ENCODE measurements at regions of chr16 and their contacts with region 1.

Region 1: GRCh38 chr16:17467923-17468540 is 2.7 kb downstream of the XYLT1 start:
- DNase-seq: peak in 5 of 9 donors; percentile 13 to 39 (median 24)
- ATAC-seq: peak; percentile 39
- H3K4me3 ChIP-seq: peak overlapping the region; percentile 9
- H3K4me3 Mint-ChIP-seq: peak overlapping the region; percentile 84 to 98 (median 95)
- H3K27ac ChIP-seq: no peak overlapping the region
- H3K27ac Mint-ChIP-seq: peak overlapping the region in 5 of 9 donors; percentile 6 to 90 (median 20)
- H3K4me1 ChIP-seq: peaks cover 20 to 26% of the 10 kb centered on the region in 2 donors
- H3K4me1 Mint-ChIP-seq: peaks cover 47 to 64% (median 57%) of the 10 kb centered on the region in 7 donors
- H3K27me3 ChIP-seq: no peaks in the 10 kb centered on the region
- H3K27me3 Mint-ChIP-seq: no peaks in the 10 kb centered on the region

Region 2: DNA sequence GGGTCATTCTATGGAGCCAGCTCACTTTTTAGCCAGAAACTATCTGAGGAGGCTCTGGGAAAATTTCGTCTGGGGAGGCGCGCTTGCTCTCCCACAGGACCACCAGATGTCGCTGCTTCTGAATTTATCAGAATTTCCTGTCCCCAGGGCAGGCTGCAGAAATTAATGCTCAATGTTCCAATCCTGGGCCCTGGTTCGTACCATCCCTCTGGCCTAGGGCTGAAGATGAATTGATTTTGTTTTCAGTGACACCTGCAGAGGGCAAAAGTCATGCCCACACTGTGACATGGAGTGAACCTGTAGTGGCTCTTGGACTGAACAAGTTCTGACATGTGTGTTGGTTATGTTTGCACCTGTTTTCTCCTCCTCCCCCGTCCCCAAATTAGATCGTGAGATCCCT is 606.5 kb before region 1 on chr16:
- CTCF ChIA-PET with region 1: no interaction called
- POLR2A ChIA-PET with region 1: no interaction called
- intact Hi-C with region 1: loop called (anchors 1 to 5 kb)
- DNase-seq: peak; percentile 15 to 63 (median 50)
- ATAC-seq: no peak
- H3K4me3 ChIP-seq: no peak overlapping the region
- H3K4me3 Mint-ChIP-seq: no peak overlapping the region
- H3K27ac ChIP-seq: no peak overlapping the region
- H3K27ac Mint-ChIP-seq: peak overlapping the region in 1 of 9 donors; percentile 13
- H3K4me1 ChIP-seq: no peaks in the 10 kb centered on the region
- H3K4me1 Mint-ChIP-seq: peaks cover 0 to 3% (median 0%) of the 10 kb centered on the region in 7 donors
- H3K27me3 ChIP-seq: no peaks in the 10 kb centered on the region
- H3K27me3 Mint-ChIP-seq: peaks cover 2 to 17% (median 10%) of the 10 kb centered on the region in 5 donors

Region 3: DNA sequence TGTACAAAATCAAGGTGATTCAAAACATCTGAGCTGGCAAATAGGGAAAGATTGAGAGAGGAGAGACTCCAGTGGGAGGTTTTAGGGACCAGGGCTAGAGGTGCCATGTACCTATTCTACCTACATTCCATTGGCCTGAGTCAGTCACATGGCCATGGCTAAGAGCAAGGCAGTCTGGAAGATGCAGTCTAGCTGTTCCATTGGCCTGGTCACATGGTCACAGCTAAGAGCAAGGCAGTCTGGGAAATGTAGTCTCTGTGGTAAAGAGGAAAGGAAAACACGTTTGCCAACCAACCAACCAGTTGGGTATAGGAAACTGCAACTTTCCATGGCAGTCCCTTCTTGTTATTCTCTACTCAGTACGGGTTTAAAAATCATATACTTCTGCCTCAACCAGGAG is 366.4 kb before region 1 on chr16:
- CTCF ChIA-PET with region 1: no interaction called
- POLR2A ChIA-PET with region 1: no interaction called
- intact Hi-C with region 1: no loop called
- DNase-seq: no peak
- ATAC-seq: no peak
- H3K4me3 ChIP-seq: no peak overlapping the region
- H3K4me3 Mint-ChIP-seq: no peak overlapping the region
- H3K27ac ChIP-seq: no peak overlapping the region
- H3K27ac Mint-ChIP-seq: peak overlapping the region in 2 of 9 donors; percentile 39 to 44
- H3K4me1 ChIP-seq: peaks cover 4 to 9% of the 10 kb centered on the region in 2 donors
- H3K4me1 Mint-ChIP-seq: peaks cover 9 to 30% (median 19%) of the 10 kb centered on the region in 7 donors
- H3K27me3 ChIP-seq: no peaks in the 10 kb centered on the region
- H3K27me3 Mint-ChIP-seq: no peaks in the 10 kb centered on the region

Region 4: DNA sequence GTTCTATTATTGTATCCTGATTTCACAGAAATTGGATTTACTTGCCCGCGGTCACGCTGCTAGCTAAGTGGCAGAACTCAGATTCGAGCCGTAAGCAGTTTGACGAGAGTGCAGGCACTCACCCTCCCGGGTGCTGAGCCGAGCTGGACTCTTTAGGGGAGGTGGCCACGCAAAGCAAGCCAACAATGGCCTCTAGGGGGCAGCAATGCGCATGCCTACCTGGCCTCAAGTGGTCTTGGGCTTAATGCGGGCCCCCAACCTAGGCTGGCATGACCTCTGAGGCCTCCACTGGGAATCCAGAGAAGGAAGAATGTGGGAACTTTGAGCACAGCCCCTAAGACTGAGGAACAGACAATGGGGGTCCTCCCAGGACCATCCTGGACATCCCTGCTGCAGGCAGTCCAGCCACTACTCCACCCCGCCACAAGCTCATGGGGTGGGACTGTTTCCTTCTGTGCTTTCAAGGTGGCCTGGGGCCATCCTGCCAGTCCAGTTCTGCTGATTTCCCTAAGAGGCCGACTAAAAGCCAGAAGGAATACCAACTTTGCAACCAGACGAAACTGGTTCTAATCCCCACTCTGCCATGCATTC is 273.7 kb before region 1 on chr16:
- CTCF ChIA-PET with region 1: interaction called, 10 read pairs
- POLR2A ChIA-PET with region 1: no interaction called
- intact Hi-C with region 1: loop called (anchors 1 to 2 kb)
- DNase-seq: peak; percentile 4 to 57 (median 28)
- ATAC-seq: peak; percentile 70
- H3K4me3 ChIP-seq: no peak overlapping the region
- H3K4me3 Mint-ChIP-seq: no peak overlapping the region
- H3K27ac ChIP-seq: no peak overlapping the region
- H3K27ac Mint-ChIP-seq: no peak overlapping the region
- H3K4me1 ChIP-seq: no peaks in the 10 kb centered on the region
- H3K4me1 Mint-ChIP-seq: peaks cover 0 to 13% (median 0%) of the 10 kb centered on the region in 7 donors
- H3K27me3 ChIP-seq: no peaks in the 10 kb centered on the region
- H3K27me3 Mint-ChIP-seq: no peaks in the 10 kb centered on the region

Region 5: GRCh38 chr16:17238284-17239028 is 229.6 kb before region 1 on chr16:
- CTCF ChIA-PET with region 1: no interaction called
- POLR2A ChIA-PET with region 1: no interaction called
- intact Hi-C with region 1: loop called in 1 of 2 experiments (anchors 10 kb)
- DNase-seq: peak in 1 of 9 donors; percentile 22
- ATAC-seq: peak; percentile 57
- H3K4me3 ChIP-seq: no peak overlapping the region
- H3K4me3 Mint-ChIP-seq: peak overlapping the region in 3 of 10 donors; percentile 5 to 58 (median 30)
- H3K27ac ChIP-seq: no peak overlapping the region
- H3K27ac Mint-ChIP-seq: peak overlapping the region in 3 of 9 donors; percentile 29 to 65 (median 46)
- H3K4me1 ChIP-seq: peaks cover 0 to 5% of the 10 kb centered on the region in 2 donors
- H3K4me1 Mint-ChIP-seq: peaks cover 29 to 47% (median 43%) of the 10 kb centered on the region in 7 donors
- H3K27me3 ChIP-seq: no peaks in the 10 kb centered on the region
- H3K27me3 Mint-ChIP-seq: no peaks in the 10 kb centered on the region

Region 6: GRCh38 chr16:17343028-17343427 is 125.0 kb before region 1 on chr16:
- CTCF ChIA-PET with region 1: interaction called, 3 read pairs
- POLR2A ChIA-PET with region 1: interaction called, 3 read pairs
- intact Hi-C with region 1: loop called in 1 of 2 experiments (anchors 2 kb)
- DNase-seq: peak in 8 of 9 donors; percentile 25 to 69 (median 56)
- ATAC-seq: peak; percentile 80
- H3K4me3 ChIP-seq: peak overlapping the region; percentile 16
- H3K4me3 Mint-ChIP-seq: peak overlapping the region; percentile 40 to 83 (median 76)
- H3K27ac ChIP-seq: no peak overlapping the region
- H3K27ac Mint-ChIP-seq: peak overlapping the region; percentile 32 to 95 (median 90)
- H3K4me1 ChIP-seq: peaks cover 51 to 64% of the 10 kb centered on the region in 2 donors
- H3K4me1 Mint-ChIP-seq: peaks cover 61 to 97% (median 83%) of the 10 kb centered on the region in 7 donors
- H3K27me3 ChIP-seq: no peaks in the 10 kb centered on the region
- H3K27me3 Mint-ChIP-seq: no peaks in the 10 kb centered on the region

Region 7: GRCh38 chr16:17416461-17417311 is 51.3 kb before region 1 on chr16:
- CTCF ChIA-PET with region 1: no interaction called
- POLR2A ChIA-PET with region 1: no interaction called
- intact Hi-C with region 1: loop called (anchors 1 to 5 kb)
- DNase-seq: peak; percentile 24 to 65 (median 55)
- ATAC-seq: peak; percentile 93
- H3K4me3 ChIP-seq: peak overlapping the region; percentile 22
- H3K4me3 Mint-ChIP-seq: peak overlapping the region; percentile 68 to 91 (median 85)
- H3K27ac ChIP-seq: peak overlapping the region; percentile 60
- H3K27ac Mint-ChIP-seq: peak overlapping the region; percentile 79 to 97 (median 91)
- H3K4me1 ChIP-seq: peaks cover 13 to 14% of the 10 kb centered on the region in 2 donors
- H3K4me1 Mint-ChIP-seq: peaks cover 18 to 69% (median 52%) of the 10 kb centered on the region in 7 donors
- H3K27me3 ChIP-seq: no peaks in the 10 kb centered on the region
- H3K27me3 Mint-ChIP-seq: no peaks in the 10 kb centered on the region

Region 8: DNA sequence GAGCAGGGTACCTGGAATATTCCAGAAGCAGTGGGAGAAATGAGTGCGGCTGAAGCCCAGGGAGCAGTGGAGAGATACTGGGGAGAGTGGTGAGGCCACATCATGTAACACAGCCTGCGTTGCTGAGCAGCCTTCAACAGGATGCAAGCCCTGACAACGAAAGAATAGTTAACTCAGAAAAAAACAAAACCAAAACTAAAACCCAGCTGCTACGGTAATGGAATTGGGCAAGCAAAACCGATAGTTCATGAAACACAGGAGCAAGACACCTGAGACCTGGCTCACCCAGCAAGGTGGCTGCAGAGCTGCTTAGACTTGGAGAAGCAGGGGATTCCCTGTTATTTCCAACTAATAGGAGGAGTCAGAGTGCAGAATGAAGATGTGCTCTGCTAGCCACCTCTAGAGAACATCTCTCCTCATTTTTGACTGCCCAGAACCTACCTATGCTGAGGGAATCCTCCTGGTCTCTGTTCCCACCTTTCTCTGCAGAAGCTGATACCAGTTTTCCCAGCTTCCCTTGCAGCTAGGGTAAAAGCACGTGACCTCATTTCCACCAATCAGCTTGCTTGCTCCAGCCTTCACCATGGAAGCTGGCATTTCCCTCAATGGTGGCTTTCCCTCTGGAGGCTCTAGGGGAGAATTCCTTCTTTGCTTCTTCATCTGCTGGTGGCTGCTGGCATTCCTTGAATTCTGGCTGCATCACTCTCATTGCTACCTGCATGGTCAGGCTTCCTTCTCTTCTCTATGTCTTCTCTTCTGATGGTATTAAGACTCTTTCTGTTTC is 62.1 kb after region 1 on chr16:
- CTCF ChIA-PET with region 1: no interaction called
- POLR2A ChIA-PET with region 1: no interaction called
- intact Hi-C with region 1: loop called in 1 of 2 experiments (anchors 2 kb)
- DNase-seq: peak; percentile 11 to 71 (median 54)
- ATAC-seq: peak; percentile 85
- H3K4me3 ChIP-seq: peak overlapping the region; percentile 97
- H3K4me3 Mint-ChIP-seq: peak overlapping the region; percentile 78 to 95 (median 89)
- H3K27ac ChIP-seq: peak overlapping the region; percentile 52
- H3K27ac Mint-ChIP-seq: peak overlapping the region; percentile 90 to 98 (median 93)
- H3K4me1 ChIP-seq: peaks cover 4 to 6% of the 10 kb centered on the region in 2 donors
- H3K4me1 Mint-ChIP-seq: peaks cover 8 to 36% (median 25%) of the 10 kb centered on the region in 7 donors
- H3K27me3 ChIP-seq: no peaks in the 10 kb centered on the region
- H3K27me3 Mint-ChIP-seq: peaks cover 0 to 4% (median 0%) of the 10 kb centered on the region in 5 donors

Region 9: GRCh38 chr16:17817260-17817659 is 349.2 kb after region 1 on chr16:
- CTCF ChIA-PET with region 1: no interaction called
- POLR2A ChIA-PET with region 1: no interaction called
- intact Hi-C with region 1: no loop called
- DNase-seq: no peak
- ATAC-seq: no peak
- H3K4me3 ChIP-seq: no peak overlapping the region
- H3K4me3 Mint-ChIP-seq: no peak overlapping the region
- H3K27ac ChIP-seq: no peak overlapping the region
- H3K27ac Mint-ChIP-seq: no peak overlapping the region
- H3K4me1 ChIP-seq: no peaks in the 10 kb centered on the region
- H3K4me1 Mint-ChIP-seq: no peaks in the 10 kb centered on the region
- H3K27me3 ChIP-seq: no peaks in the 10 kb centered on the region
- H3K27me3 Mint-ChIP-seq: peaks cover 0 to 14% (median 10%) of the 10 kb centered on the region in 5 donors

Region 10: DNA sequence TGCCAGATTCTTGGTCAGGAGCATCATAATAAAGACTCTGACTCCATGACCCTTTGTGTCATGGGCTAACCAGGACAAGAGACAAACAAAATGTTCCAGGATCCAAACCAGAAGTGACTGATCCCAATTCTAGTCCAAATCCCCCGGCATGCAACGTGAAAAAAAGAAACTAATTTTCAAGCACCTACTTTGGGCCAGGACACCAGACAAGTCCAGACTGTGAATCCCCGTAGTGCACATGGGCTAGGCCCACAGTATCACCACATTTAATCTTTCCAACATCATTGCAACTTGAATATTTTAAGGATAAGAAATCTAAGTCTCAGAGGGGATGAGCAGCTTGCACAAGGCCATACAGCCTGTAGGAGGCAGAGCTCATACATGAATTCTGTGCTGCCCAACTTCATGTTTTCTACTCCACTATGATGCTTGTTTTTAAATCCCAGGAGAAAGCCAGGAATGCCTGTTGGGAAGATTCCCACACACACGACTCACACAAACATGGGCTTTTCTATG is 502.8 kb after region 1 on chr16:
- CTCF ChIA-PET with region 1: no interaction called
- POLR2A ChIA-PET with region 1: no interaction called
- intact Hi-C with region 1: no loop called
- DNase-seq: no peak
- ATAC-seq: no peak
- H3K4me3 ChIP-seq: no peak overlapping the region
- H3K4me3 Mint-ChIP-seq: no peak overlapping the region
- H3K27ac ChIP-seq: no peak overlapping the region
- H3K27ac Mint-ChIP-seq: no peak overlapping the region
- H3K4me1 ChIP-seq: no peaks in the 10 kb centered on the region
- H3K4me1 Mint-ChIP-seq: no peaks in the 10 kb centered on the region
- H3K27me3 ChIP-seq: no peaks in the 10 kb centered on the region
- H3K27me3 Mint-ChIP-seq: peaks cover 0 to 20% (median 10%) of the 10 kb centered on the region in 5 donors

Measured in naive thymus-derived CD4-positive, alpha-beta T cell (primary cell).